Activated T-helper 2 cell treated with anti-CD3 and anti-CD28 coated beads, Interferon-gamma antibody, Interleukin-2, Interleukin-4, amounts not matched to agents 10 μg/mL and 5 μg/mL and 100 μg/mL, durations not matched to agents 14 hours and 24 hours and 36 hours (primary cell): ENCODE measurements at regions of chr12 and their contacts with region 1.

Region 1: DNA sequence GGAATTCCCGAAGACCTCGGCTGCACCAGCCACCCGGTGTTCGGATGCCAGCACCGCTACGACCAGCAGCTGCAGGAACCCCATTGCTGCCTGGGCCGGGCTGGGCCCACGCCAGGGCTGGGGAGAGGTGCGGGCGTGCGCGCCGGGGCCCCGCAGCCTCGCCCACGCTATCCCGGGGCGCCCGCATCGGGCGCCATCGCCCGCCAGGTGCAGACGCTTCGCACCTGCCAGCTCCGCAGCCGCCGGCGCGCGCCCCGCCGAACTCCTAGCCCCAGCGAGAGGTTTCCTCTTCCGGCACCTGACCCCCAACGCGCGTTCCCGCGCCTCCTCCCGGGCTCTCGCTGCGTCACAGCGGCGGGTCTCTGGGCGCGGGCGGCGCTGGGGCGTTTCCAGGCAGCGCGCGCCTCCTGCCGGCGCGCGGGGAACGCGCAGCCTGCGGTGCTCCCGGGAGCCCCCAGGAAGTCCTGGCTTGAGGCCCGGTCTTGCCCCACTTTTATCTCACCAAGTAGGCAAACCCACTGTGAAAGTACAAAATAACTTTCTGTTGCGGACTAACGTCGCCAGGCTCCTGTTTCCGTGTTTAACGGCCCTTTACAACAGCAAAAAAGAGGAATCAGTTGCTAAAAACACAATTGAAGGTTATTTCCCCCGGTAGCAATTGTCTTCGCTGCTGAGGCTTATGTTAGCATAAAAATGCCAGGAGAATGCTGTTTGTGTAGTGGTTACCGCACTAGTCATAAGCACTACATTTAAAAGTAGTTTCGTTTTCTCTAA is at the start of gene TM7SF3:
- DNase-seq: peak; percentile 94
- H3K4me3 Mint-ChIP-seq: peak within 1 kb of the TSS; percentile 93
- H3K27ac Mint-ChIP-seq: peak within 1 kb of the TSS; percentile 89
- H3K4me1 Mint-ChIP-seq: peaks cover 57% of the 10 kb centered on the region
- H3K27me3 Mint-ChIP-seq: no peaks in the 10 kb centered on the region
- total RNA-seq, gene TM7SF3: 46.7 and 51.5 TPM in 2 replicates

Region 2: DNA sequence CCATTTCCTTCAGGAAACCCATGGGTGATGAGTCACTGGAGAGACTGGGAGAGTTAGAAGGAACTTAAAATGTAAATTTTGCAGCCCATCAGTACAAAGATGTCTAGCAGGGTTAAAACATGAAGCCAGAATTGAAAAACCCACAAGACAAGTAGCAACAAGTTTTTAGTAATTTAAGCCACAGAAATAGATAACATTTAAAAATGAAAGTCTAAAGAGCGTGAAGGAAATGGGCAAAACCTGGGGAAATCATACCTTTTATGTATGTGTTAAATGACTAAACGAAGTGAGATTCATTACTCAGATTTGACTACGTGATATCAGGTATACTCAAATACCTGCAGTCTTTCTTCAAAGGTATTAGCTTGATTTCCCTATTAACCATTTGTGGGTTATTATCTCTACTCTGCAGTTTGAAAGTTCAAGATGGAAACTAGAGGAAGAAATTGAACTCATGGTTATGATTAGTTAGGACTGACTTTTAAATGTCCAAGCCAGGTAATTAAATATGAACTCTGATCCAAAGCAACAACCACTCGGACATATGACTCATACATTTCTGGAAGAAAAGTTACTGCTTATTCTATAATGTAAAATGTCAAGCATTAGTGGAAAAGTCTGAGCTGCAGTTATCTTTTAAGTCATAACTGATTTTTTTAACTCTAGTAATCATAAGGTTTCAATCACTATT is 265.4 kb before region 1 on chr12:
- intact Hi-C with region 1: loop called (anchors 5 kb)
- DNase-seq: no peak
- H3K4me3 Mint-ChIP-seq: peak overlapping the region; percentile 42
- H3K27ac Mint-ChIP-seq: peak overlapping the region; percentile 65
- H3K4me1 Mint-ChIP-seq: peaks cover 57% of the 10 kb centered on the region
- H3K27me3 Mint-ChIP-seq: no peaks in the 10 kb centered on the region

Region 3: GRCh38 chr12:26853303-26854030 is 160.8 kb before region 1 on chr12:
- intact Hi-C with region 1: loop called (anchors 1 kb)
- DNase-seq: peak; percentile 53
- H3K4me3 Mint-ChIP-seq: no peak overlapping the region
- H3K27ac Mint-ChIP-seq: no peak overlapping the region
- H3K4me1 Mint-ChIP-seq: no peaks in the 10 kb centered on the region
- H3K27me3 Mint-ChIP-seq: peaks cover 9% of the 10 kb centered on the region

Region 4: GRCh38 chr12:27243804-27244683 is 229.8 kb after region 1 on chr12 and contains the start of gene STK38L:
- intact Hi-C with region 1: loop called (anchors 10 kb)
- DNase-seq: peak; percentile 96
- H3K4me3 Mint-ChIP-seq: peak within 1 kb of the TSS; percentile 96
- H3K27ac Mint-ChIP-seq: peak within 1 kb of the TSS; percentile 94
- H3K4me1 Mint-ChIP-seq: peaks cover 35% of the 10 kb centered on the region
- H3K27me3 Mint-ChIP-seq: no peaks in the 10 kb centered on the region
- total RNA-seq, gene STK38L: 23.4 and 24.2 TPM in 2 replicates

Region 5: DNA sequence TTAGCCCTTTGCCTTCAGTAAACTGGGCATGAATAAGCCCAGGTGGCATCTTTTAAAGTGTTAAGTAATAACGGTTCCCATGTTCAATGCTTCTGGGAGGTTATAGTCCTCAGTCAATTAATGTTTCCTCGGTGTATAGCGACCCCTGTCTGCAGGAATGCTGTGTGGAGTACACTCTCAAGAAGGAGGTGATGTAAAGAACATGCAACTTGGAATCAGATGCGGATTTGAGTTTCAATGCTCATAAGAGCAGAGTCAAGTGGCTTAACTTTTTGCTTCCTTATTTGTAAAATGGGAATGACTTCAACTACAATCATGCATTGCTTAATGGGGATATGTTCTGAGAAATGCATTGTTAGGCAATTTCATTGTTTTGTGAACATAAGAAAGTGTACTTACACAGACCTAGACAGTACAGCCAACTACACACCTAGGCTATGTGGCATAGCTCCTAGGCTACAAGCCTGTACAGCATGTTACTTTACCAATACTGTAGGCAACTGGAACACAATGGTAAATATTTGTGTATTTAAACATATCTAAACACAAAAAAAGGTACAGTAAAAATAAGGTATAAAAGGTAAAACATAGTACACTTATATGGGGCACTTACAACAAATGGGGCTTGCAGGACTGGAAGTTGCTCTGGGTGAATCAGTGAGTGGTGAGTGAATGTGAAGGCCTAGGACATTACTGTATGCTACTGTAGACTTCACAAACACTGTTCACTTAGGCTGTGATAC is 689.6 kb after region 1 on chr12:
- intact Hi-C with region 1: loop called (anchors 5 kb)
- DNase-seq: peak; percentile 49
- H3K4me3 Mint-ChIP-seq: no peak overlapping the region
- H3K27ac Mint-ChIP-seq: no peak overlapping the region
- H3K4me1 Mint-ChIP-seq: no peaks in the 10 kb centered on the region
- H3K27me3 Mint-ChIP-seq: peaks cover 20% of the 10 kb centered on the region